Mammary epithelial cell (primary cell): ENCODE measurements at regions of chr2 and their contacts with region 1.

Region 1: DNA sequence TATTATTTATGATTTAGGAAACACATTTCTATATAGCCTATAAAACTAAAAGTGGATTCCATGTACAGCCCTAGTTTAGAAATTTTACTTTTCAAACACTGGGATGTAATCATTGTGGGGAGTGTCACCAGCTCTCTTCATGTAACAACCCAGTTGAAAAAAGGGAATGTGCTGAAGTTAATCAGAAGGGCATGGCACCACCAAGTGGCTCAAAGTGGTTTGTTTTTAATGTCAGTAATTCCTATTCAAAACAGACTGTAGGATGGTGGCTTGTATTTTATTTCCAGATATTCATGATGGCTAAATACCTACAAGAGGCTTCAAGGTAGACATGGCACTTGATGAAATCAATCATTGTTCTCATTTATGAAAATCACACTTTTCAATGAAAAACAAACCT is 58.1 kb upstream of the TMEM182 start:
- DNase-seq: peak; percentile 50
- H3K4me3 ChIP-seq: no peak overlapping the region
- H3K27ac ChIP-seq: no peak overlapping the region
- H3K4me1 ChIP-seq: peaks cover under 1% of the 10 kb centered on the region
- H3K27me3 ChIP-seq: no peaks in the 10 kb centered on the region
- CTCF ChIP-seq: peak; percentile 55 to 70

Region 2: DNA sequence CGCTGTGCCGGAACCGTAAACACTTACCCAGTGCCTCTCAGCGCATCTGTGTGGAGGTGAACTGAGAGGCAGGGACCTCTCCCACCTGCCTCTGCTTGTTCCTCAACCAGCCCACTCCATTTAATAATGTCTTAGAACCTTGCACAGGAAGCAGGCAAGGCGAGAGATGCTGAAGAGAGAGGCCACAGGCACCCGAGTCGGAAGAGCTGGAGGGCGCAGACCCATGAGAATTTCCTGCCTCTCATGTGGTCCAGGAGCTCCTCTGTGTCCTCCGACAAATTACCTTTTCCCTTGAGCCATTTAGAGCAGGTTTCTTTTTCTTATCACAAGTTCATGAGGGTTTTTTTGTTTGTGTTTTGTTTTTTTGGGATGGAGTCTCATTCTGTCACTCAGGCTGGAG is 1223.9 kb before region 1 on chr2:
- CTCF ChIA-PET with region 1: no interaction called
- dilution Hi-C with region 1: no loop called
- in situ Hi-C with region 1: no loop called
- intact Hi-C with region 1: loop called (anchors 5 kb)
- DNase-seq: no peak
- H3K4me3 ChIP-seq: no peak overlapping the region
- H3K27ac ChIP-seq: no peak overlapping the region
- H3K4me1 ChIP-seq: peaks cover 7% of the 10 kb centered on the region
- H3K27me3 ChIP-seq: no peaks in the 10 kb centered on the region
- CTCF ChIP-seq: no peak

Region 3: GRCh38 chr2:102690012-102690411 is 13.7 kb before region 1 on chr2:
- CTCF ChIA-PET with region 1: no interaction called
- dilution Hi-C with region 1: no loop called
- in situ Hi-C with region 1: no loop called
- intact Hi-C with region 1: no loop called
- DNase-seq: no peak
- H3K4me3 ChIP-seq: no peak overlapping the region
- H3K27ac ChIP-seq: no peak overlapping the region
- H3K4me1 ChIP-seq: no peaks in the 10 kb centered on the region
- H3K27me3 ChIP-seq: no peaks in the 10 kb centered on the region
- CTCF ChIP-seq: no peak

Region 4: GRCh38 chr2:102832789-102833188 is 129.0 kb after region 1 on chr2:
- CTCF ChIA-PET with region 1: no interaction called
- dilution Hi-C with region 1: no loop called
- in situ Hi-C with region 1: no loop called
- intact Hi-C with region 1: no loop called
- DNase-seq: no peak
- H3K4me3 ChIP-seq: no peak overlapping the region
- H3K27ac ChIP-seq: no peak overlapping the region
- H3K4me1 ChIP-seq: no peaks in the 10 kb centered on the region
- H3K27me3 ChIP-seq: no peaks in the 10 kb centered on the region
- CTCF ChIP-seq: no peak

Region 5: GRCh38 chr2:102950371-102950946 is 246.7 kb after region 1 on chr2:
- CTCF ChIA-PET with region 1: no interaction called
- dilution Hi-C with region 1: no loop called
- in situ Hi-C with region 1: no loop called
- intact Hi-C with region 1: no loop called
- DNase-seq: no peak
- H3K4me3 ChIP-seq: no peak overlapping the region
- H3K27ac ChIP-seq: no peak overlapping the region
- H3K4me1 ChIP-seq: no peaks in the 10 kb centered on the region
- H3K27me3 ChIP-seq: no peaks in the 10 kb centered on the region
- CTCF ChIP-seq: no peak